Left lung (tissue), 14 donors: ENCODE measurements at regions of chr5 and their contacts with region 1.

Region 1: DNA sequence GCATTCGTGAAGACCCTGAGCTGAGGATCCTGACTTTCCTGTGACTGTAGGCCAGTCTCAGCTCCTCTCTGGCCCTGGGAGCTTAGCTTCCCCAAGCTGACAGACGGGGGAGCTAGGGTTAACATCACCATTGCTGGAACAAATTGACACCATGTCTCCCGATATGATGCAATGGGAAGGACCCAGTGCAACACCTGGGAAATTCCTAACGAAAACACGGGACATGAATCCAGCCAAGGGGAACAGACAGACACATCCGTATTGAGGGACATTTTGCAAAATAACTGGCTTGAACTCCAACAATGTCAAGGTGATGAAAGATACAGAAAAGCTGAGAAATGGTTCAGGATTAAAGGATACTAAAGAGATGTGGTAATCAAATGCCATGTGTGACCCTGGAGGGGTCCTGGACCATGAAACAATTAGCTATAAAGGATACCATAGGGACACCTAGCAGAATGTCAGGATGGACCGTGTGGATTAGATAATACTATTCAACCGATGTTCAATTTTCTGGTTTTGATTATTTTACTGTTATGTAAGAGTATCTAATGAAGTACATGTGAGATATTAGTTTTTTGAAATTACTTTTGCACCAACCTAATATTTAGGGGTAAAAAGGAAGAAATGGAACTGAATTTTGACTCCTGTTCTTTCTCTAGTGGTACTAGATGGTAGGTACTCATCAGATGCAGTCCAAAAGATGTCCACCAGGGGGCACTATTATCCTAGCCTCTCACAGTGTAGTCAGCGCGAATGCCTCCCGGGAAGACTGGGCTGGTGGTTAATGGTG is 52.7 kb downstream of the NDST1 start:
- DNase-seq: peak in 3 of 4 donors; percentile 74 to 90 (median 82)
- ATAC-seq: peak; percentile 96
- H3K4me3 ChIP-seq: no peak overlapping the region
- H3K27ac ChIP-seq: no peak overlapping the region
- H3K4me1 ChIP-seq: peaks cover 0 to 9% of the 10 kb centered on the region in 2 donors
- H3K27me3 ChIP-seq: no peaks in the 10 kb centered on the region
- CTCF ChIP-seq: peak; percentile 94 to 95

Region 2: GRCh38 chr5:149990518-149991376 is 569.9 kb before region 1 on chr5:
- intact Hi-C with region 1: no loop called
- DNase-seq: peak in 3 of 4 donors; percentile 52 to 82 (median 61)
- ATAC-seq: peak; percentile 99
- H3K4me3 ChIP-seq: no peak overlapping the region
- H3K27ac ChIP-seq: no peak overlapping the region
- H3K4me1 ChIP-seq: no peaks in the 10 kb centered on the region
- H3K27me3 ChIP-seq: no peaks in the 10 kb centered on the region
- CTCF ChIP-seq: peak; percentile 81 to 89

Region 3: DNA sequence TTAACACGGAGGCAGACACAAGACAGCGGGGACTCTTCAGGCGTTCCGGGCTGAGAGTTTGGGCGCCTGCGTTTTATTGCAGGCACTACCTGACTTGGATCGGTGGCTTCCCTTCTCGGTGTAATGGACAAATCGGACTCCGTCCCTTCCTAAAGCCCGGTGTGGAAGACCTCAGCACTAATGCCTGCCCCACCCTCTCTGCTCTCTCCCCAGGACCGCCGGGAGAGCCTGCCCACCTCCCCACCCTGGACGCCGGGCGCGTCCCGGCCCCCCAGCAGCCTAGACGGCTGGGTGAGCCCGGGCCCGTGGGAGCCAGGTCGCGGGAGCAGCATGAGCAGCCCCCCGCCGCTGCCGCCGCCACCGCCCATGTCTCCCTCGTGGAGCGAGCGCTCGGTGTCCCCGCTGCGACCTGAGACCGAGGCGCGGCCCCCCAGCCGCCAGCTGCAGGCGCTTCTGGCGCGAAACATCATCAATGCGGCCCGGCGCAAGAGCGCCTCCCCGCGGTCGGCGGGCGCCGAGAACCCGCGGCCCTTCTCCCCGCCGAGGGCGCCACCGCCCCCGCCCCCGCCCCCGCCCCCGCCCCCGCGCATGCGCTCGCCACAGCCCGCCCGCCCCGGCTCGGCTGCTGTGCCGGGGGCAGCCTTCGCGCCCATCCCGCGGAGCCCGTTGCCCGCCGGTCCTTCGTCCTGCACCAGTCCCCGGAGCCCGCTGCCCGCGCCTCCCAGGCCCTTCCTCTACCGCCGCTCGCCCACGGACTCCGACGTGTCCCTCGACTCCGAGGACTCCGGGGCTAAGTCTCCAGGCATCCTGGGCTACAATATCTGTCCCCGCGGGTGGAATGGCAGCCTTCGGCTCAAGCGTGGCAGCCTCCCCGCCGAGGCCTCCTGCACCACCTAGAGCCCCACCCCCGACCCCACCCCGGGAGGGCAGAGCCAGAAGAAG is 95.9 kb after region 1 on chr5:
- intact Hi-C with region 1: loop called in 1 of 2 experiments (anchors 5 kb)
- DNase-seq: peak in 3 of 4 donors; percentile 65 to 93 (median 91)
- ATAC-seq: peak; percentile 83
- H3K4me3 ChIP-seq: peak overlapping the region; percentile 35 to 37
- H3K27ac ChIP-seq: peak overlapping the region; percentile 7 to 45
- H3K4me1 ChIP-seq: peaks cover 4 to 11% of the 10 kb centered on the region in 2 donors
- H3K27me3 ChIP-seq: no peaks in the 10 kb centered on the region
- CTCF ChIP-seq: peak; percentile 53 to 70

Region 4: GRCh38 chr5:150751096-150751891 is 190.7 kb after region 1 on chr5:
- intact Hi-C with region 1: no loop called
- DNase-seq: no peak
- ATAC-seq: no peak
- H3K4me3 ChIP-seq: no peak overlapping the region
- H3K27ac ChIP-seq: peak overlapping the region; percentile 2 to 5
- H3K4me1 ChIP-seq: peaks cover 12 to 47% of the 10 kb centered on the region in 2 donors
- H3K27me3 ChIP-seq: no peaks in the 10 kb centered on the region
- CTCF ChIP-seq: no peak

Region 5: GRCh38 chr5:150846654-150847333 is 286.2 kb after region 1 on chr5:
- intact Hi-C with region 1: loop called in 1 of 2 experiments (anchors 10 kb)
- DNase-seq: peak in 3 of 4 donors; percentile 36 to 86 (median 61)
- ATAC-seq: peak; percentile 99
- H3K4me3 ChIP-seq: no peak overlapping the region
- H3K27ac ChIP-seq: peak overlapping the region in 1 of 2 donors; percentile 39
- H3K4me1 ChIP-seq: peaks cover 0 to 9% of the 10 kb centered on the region in 2 donors
- H3K27me3 ChIP-seq: no peaks in the 10 kb centered on the region
- CTCF ChIP-seq: peak in 1 of 2 donors; percentile 45